ENCODE measurements at regions of chr1 and their contacts with region 1.

Region 1: DNA sequence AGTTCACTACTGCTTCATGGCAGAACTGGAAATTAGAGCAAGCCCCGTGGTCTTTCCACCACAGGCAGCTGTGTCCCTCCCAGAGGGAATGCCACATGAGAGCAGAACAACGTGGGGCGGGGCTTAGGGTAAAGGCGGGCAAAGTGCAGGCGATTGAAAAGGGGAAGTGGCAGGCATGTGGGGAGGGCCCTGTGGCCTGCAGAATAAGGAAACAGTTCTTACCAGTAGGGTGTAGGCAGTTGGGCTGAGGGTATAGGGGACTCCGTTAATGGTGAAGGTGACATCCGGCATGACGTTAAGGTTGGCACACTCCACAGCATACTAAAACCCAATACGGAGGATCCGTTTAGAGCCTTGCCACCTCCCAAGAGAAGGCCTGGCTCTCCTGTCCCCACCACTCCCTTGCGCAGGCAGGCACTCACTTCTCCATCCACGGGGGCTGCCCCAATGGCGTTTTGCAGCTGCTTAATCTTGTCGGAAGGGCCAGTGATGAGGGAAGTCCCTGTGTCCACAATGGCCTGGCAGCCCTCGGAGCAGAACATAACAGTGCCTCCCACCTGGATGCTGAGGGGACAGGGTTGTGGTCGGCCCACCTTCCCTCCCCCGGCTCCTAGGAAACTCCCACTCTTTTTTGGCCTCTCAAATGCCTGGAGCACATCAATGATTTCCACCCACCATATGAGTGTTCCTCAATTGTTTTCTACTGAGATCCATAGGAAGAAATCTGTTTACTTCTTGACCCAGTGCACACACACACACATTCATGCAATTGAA is 9.1 kb upstream of the RAB7B start:
- DNase-seq: peak in 8 of 9 donors; percentile 12 to 47 (median 26)
- ATAC-seq: peak; percentile 98
- H3K4me3 ChIP-seq: no peak overlapping the region
- H3K4me3 Mint-ChIP-seq: peak overlapping the region; percentile 4 to 76 (median 62)
- H3K27ac ChIP-seq: no peak overlapping the region
- H3K27ac Mint-ChIP-seq: peak overlapping the region in 5 of 9 donors; percentile 1 to 77 (median 50)
- H3K4me1 ChIP-seq: peaks cover 0 to 12% of the 10 kb centered on the region in 2 donors
- H3K4me1 Mint-ChIP-seq: peaks cover 15 to 27% (median 23%) of the 10 kb centered on the region in 7 donors
- H3K27me3 ChIP-seq: no peaks in the 10 kb centered on the region
- H3K27me3 Mint-ChIP-seq: peaks cover 0 to 5% (median 0%) of the 10 kb centered on the region in 5 donors

Region 2: GRCh38 chr1:206023695-206024094 is 11.4 kb after region 1 on chr1 and contains the start of gene CTSE:
- CTCF ChIA-PET with region 1: no interaction called
- POLR2A ChIA-PET with region 1: no interaction called
- intact Hi-C with region 1: loop called in 1 of 2 experiments (anchors 1 kb)
- DNase-seq: no peak
- ATAC-seq: no peak
- H3K4me3 ChIP-seq: no peak within 1 kb of the TSS
- H3K4me3 Mint-ChIP-seq: no peak within 1 kb of the TSS
- H3K27ac ChIP-seq: no peak within 1 kb of the TSS
- H3K27ac Mint-ChIP-seq: no peak within 1 kb of the TSS
- H3K4me1 ChIP-seq: no peaks in the 10 kb centered on the region
- H3K4me1 Mint-ChIP-seq: no peaks in the 10 kb centered on the region
- H3K27me3 ChIP-seq: no peaks in the 10 kb centered on the region
- H3K27me3 Mint-ChIP-seq: peaks cover 0 to 49% (median 11%) of the 10 kb centered on the region in 5 donors
- total RNA-seq, gene CTSE: not detected

Region 3: DNA sequence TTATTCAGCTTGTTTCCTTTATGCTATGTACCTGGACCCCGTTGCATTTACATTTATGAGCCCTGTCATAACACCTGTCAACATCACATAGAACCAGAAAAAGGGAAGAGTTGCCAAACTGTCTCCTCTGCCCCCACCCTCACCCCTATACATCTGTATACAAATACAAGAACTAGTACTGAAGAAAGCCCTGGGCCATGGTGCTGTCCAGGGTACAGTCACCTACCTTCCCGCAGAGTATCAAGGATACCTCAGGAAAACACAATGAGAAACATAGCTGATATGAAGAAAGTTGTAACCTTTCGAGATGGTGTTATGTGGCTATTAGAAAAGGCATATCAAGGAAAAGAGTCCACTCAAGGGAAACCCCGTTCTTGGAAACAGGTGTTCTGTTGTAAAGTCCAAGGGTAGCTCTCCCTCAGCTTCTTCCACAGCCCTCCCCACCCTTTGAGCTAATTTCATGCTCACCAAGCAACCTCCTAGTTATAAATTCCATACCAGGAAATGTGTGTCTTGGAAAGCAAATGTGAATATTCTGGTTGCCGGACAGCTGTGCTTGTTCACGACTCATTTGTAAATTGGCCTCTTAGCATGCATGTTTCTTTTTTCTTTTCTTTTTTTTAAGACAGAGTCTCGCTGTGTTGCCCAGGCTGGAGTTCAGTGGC is 121.6 kb after region 1 on chr1:
- CTCF ChIA-PET with region 1: no interaction called
- POLR2A ChIA-PET with region 1: no interaction called
- intact Hi-C with region 1: no loop called
- DNase-seq: no peak
- ATAC-seq: no peak
- H3K4me3 ChIP-seq: no peak overlapping the region
- H3K4me3 Mint-ChIP-seq: no peak overlapping the region
- H3K27ac ChIP-seq: no peak overlapping the region
- H3K27ac Mint-ChIP-seq: no peak overlapping the region
- H3K4me1 ChIP-seq: no peaks in the 10 kb centered on the region
- H3K4me1 Mint-ChIP-seq: no peaks in the 10 kb centered on the region
- H3K27me3 ChIP-seq: no peaks in the 10 kb centered on the region
- H3K27me3 Mint-ChIP-seq: peaks cover 7 to 46% (median 11%) of the 10 kb centered on the region in 5 donors